ENCODE measurements at regions of chr1 and their contacts with region 1.

Region 1: DNA sequence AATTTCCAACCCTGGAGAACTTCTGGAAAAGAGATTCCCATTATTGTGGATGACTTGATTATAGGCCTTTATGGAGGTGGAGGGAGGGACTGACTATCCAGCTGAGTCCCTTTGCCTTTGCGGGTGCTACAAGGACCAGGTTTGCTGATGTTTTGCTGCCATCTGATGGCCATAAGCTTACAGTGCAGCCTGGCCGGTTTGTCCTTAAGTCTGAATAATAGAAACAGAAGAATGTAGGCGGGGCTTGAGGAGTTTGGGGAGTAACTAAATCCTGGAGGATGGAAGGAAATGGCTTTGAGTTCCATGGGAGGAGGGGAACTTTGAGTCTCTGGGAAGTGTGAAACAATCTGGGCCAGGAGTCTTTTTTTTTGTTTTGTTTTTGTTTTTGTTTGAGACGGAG is 55.7 kb upstream of the CD1D start:
- DNase-seq: peak; percentile 49
- ATAC-seq: peak; percentile 96
- H3K4me3 Mint-ChIP-seq: no peak overlapping the region
- H3K27ac Mint-ChIP-seq: no peak overlapping the region
- H3K4me1 Mint-ChIP-seq: peaks cover 3% of the 10 kb centered on the region
- H3K27me3 Mint-ChIP-seq: peaks cover 16% of the 10 kb centered on the region
- CTCF ChIP-seq: peak; percentile 25

Region 2: GRCh38 chr1:157163273-157164127 is 961.5 kb before region 1 on chr1:
- CTCF ChIA-PET with region 1: no interaction called
- POLR2A ChIA-PET with region 1: no interaction called
- intact Hi-C with region 1: loop called (anchors 1 kb)
- DNase-seq: peak; percentile 76
- ATAC-seq: peak; percentile 62
- H3K4me3 Mint-ChIP-seq: no peak overlapping the region
- H3K27ac Mint-ChIP-seq: no peak overlapping the region
- H3K4me1 Mint-ChIP-seq: no peaks in the 10 kb centered on the region
- H3K27me3 Mint-ChIP-seq: peaks cover 18% of the 10 kb centered on the region
- CTCF ChIP-seq: peak; percentile 89

Region 3: GRCh38 chr1:157878059-157878458 is 246.9 kb before region 1 on chr1:
- CTCF ChIA-PET with region 1: interaction called, 9 read pairs
- POLR2A ChIA-PET with region 1: no interaction called
- intact Hi-C with region 1: loop called (anchors 1 kb)
- DNase-seq: no peak
- ATAC-seq: peak; percentile 54
- H3K4me3 Mint-ChIP-seq: no peak overlapping the region
- H3K27ac Mint-ChIP-seq: no peak overlapping the region
- H3K4me1 Mint-ChIP-seq: peaks cover 19% of the 10 kb centered on the region
- H3K27me3 Mint-ChIP-seq: no peaks in the 10 kb centered on the region
- CTCF ChIP-seq: no peak

Region 4: GRCh38 chr1:157984469-157984868 is 140.5 kb before region 1 on chr1:
- CTCF ChIA-PET with region 1: interaction called, 276 read pairs
- POLR2A ChIA-PET with region 1: no interaction called
- intact Hi-C with region 1: no loop called
- DNase-seq: no peak
- ATAC-seq: no peak
- H3K4me3 Mint-ChIP-seq: no peak overlapping the region
- H3K27ac Mint-ChIP-seq: no peak overlapping the region
- H3K4me1 Mint-ChIP-seq: no peaks in the 10 kb centered on the region
- H3K27me3 Mint-ChIP-seq: peaks cover 9% of the 10 kb centered on the region
- CTCF ChIP-seq: no peak

Region 5: GRCh38 chr1:158055854-158056253 is 69.1 kb before region 1 on chr1:
- CTCF ChIA-PET with region 1: no interaction called
- POLR2A ChIA-PET with region 1: no interaction called
- intact Hi-C with region 1: no loop called
- DNase-seq: no peak
- ATAC-seq: no peak
- H3K4me3 Mint-ChIP-seq: no peak overlapping the region
- H3K27ac Mint-ChIP-seq: no peak overlapping the region
- H3K4me1 Mint-ChIP-seq: peaks cover 7% of the 10 kb centered on the region
- H3K27me3 Mint-ChIP-seq: peaks cover 21% of the 10 kb centered on the region
- CTCF ChIP-seq: no peak

Region 6: GRCh38 chr1:158095737-158096335 is 29.2 kb before region 1 on chr1:
- CTCF ChIA-PET with region 1: interaction called, 184 read pairs
- POLR2A ChIA-PET with region 1: no interaction called
- intact Hi-C with region 1: loop called (anchors 1 kb)
- DNase-seq: no peak
- ATAC-seq: peak; percentile 79
- H3K4me3 Mint-ChIP-seq: no peak overlapping the region
- H3K27ac Mint-ChIP-seq: no peak overlapping the region
- H3K4me1 Mint-ChIP-seq: no peaks in the 10 kb centered on the region
- H3K27me3 Mint-ChIP-seq: peaks cover 15% of the 10 kb centered on the region
- CTCF ChIP-seq: no peak

Region 7: GRCh38 chr1:158329733-158330132 is 204.7 kb after region 1 on chr1:
- CTCF ChIA-PET with region 1: interaction called, 18 read pairs
- POLR2A ChIA-PET with region 1: no interaction called
- intact Hi-C with region 1: no loop called
- DNase-seq: no peak
- ATAC-seq: peak; percentile 47
- H3K4me3 Mint-ChIP-seq: no peak overlapping the region
- H3K27ac Mint-ChIP-seq: no peak overlapping the region
- H3K4me1 Mint-ChIP-seq: peaks cover 26% of the 10 kb centered on the region
- H3K27me3 Mint-ChIP-seq: no peaks in the 10 kb centered on the region
- CTCF ChIP-seq: no peak

Measured in activated B cell treated with CpG ODN at 0.5 μM for 24 hours (primary cell).